ENCODE measurements at regions of chr1 and their contacts with region 1.

Region 1: GRCh38 chr1:156838981-156839410 is 19.9 kb downstream of the INSRR start:
- DNase-seq: peak; percentile 36
- H3K4me3 Mint-ChIP-seq: no peak overlapping the region
- H3K27ac Mint-ChIP-seq: peak overlapping the region; percentile 69
- H3K4me1 Mint-ChIP-seq: peaks cover 46% of the 10 kb centered on the region
- H3K27me3 Mint-ChIP-seq: peaks cover 23% of the 10 kb centered on the region

Region 2: DNA sequence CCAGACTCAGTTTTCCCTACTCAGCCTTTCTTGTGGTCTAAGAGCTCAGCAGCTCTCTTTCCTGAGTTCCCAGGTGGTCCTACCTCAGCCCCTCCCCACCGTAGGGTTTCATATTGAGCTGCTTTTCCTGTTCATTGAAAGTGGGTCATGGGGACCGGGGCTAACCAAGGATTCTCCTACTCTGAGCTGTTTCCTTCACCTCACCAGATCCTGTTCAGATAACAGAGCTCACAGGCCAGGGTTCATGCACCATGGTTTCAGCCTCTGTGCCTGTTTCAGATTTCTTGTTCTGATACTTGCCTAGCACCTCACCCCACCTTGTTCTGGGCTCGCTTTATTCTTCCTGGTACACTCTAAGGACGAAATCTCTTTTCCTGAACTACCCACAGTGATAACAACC is 793.9 kb before region 1 on chr1:
- intact Hi-C with region 1: no loop called
- DNase-seq: peak; percentile 14
- H3K4me3 Mint-ChIP-seq: no peak overlapping the region
- H3K27ac Mint-ChIP-seq: peak overlapping the region; percentile 23
- H3K4me1 Mint-ChIP-seq: peaks cover 19% of the 10 kb centered on the region
- H3K27me3 Mint-ChIP-seq: no peaks in the 10 kb centered on the region

Region 3: GRCh38 chr1:156797212-156797871 is 41.7 kb before region 1 on chr1:
- intact Hi-C with region 1: loop called (anchors 5 kb)
- DNase-seq: peak; percentile 48
- H3K4me3 Mint-ChIP-seq: no peak overlapping the region
- H3K27ac Mint-ChIP-seq: no peak overlapping the region
- H3K4me1 Mint-ChIP-seq: peaks cover 28% of the 10 kb centered on the region
- H3K27me3 Mint-ChIP-seq: no peaks in the 10 kb centered on the region

Region 4: DNA sequence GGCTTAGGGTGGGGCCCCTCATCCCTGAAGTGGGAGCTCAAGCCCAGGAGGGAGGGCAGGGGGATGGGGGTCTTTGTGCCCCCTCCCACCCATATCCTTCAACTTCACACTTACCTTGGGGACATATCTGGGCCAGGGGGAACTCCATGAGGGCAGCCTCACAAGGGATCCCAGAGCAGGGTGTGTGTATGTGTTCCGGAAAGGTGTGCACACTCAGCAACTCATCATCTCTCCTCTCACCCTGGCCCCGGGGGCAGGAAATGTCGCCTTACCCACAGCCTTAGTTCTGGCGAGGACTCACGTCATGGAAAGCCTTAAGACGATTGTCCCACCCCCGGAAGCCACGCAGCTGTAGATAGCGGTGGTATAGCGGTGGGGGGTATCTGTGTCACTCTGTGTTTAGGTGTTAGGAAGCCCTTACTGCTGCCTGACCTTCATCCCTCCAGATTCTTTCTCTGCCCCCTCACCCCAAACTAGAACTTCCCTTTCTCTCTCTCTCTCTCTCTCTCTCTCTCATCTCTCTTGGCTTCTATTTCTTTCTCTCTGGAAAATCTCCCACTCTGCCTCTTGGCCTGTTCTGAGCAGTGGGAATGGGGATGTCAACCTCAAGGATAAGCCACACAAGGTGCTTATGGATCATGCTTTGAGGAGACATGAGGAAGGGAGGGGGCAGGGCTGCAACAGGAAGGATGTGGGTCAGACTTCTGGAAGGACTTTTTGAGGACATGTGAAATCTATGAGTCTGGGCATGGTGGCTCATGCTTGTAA is 22.3 kb before region 1 on chr1 and contains the start of gene SH2D2A:
- intact Hi-C with region 1: loop called (anchors 1 kb)
- DNase-seq: peak; percentile 94
- H3K4me3 Mint-ChIP-seq: peak within 1 kb of the TSS; percentile 88
- H3K27ac Mint-ChIP-seq: peak within 1 kb of the TSS; percentile 100
- H3K4me1 Mint-ChIP-seq: peaks cover 48% of the 10 kb centered on the region
- H3K27me3 Mint-ChIP-seq: no peaks in the 10 kb centered on the region
- total RNA-seq, gene SH2D2A: 453 and 474 TPM in 2 replicates

Measured in activated T-helper 2 cell treated with anti-CD3 and anti-CD28 coated beads, Interferon-gamma antibody, Interleukin-2, Interleukin-4, amounts not matched to agents 10 μg/mL and 5 μg/mL and 100 μg/mL, durations not matched to agents 14 hours and 24 hours and 36 hours (primary cell).